ENCODE measurements at regions of chr11 and their contacts with region 1.

Region 1: DNA sequence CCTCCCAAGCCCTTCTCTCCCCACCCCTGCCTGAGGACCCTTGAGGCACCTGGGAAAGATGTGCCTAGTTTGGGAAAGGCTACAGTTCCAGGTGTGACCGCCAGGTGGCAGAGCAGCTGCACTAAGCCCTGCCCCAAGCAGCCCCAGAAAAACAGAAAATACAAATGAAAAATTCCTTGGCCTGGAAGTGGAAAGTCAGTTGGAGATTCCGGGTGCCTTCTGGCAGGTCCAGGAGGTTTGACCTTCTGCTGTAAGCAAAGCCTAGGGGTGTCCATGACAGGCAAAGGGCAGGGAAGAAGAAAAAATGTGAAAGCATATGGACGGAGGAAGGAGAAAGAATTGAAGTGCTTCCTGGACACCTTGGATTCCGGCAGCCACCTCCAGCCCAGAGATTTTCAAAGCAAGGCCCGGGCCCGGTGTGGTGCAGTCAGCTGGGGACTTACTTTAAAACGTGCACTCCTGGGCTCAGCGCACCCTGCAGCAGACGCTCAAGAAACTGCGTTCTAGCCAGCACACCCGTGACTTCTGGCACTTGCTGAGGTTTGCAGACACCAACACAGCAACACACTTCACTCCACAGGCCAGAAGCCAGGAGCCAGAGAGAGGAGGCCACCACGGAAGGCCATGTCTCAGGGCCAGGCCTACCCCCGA is 37.3 kb upstream of the SLC22A12 start:
- DNase-seq: peak; percentile 78
- ATAC-seq: peak; percentile 75

Region 2: DNA sequence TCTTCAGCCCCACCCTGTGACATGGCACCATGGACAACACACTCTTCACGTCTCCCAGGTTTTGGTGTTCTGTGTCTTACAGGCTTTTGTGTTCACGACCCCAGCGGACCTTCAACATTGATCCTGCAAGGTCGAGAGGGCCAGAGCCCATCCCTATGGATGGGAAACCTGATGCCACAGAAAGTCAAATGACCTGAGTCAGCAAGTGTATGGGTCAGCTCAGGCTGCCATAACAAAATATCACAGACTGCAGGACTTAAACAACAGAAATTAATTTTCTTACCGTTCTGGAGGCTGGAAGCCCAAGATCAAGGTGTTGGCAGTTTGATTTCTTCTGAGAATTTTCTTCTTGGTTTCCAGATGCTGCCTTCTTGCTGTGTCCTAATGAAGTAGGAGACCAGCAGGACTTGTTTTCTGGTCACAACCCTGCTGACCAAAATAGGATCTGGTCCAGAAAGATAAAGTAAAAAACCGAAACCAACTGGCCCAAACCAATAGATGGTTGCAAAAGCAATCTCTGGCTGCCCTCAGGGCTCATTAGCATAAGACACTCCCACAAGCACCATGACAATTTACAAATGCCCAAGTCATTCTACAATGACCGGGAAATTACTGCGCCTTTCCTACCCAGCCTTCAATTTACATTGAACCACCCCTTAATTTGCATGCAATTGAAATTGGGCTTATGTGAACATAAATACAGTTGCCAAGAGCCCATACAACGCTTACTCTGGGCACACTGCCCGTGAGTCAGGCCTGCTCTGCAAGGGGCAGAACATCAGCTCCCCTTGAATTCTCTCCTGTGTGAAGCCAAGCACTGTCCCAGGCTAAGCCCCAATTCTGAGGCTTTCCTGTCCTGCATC is 80.9 kb before region 1 on chr11:
- intact Hi-C with region 1: no loop called
- DNase-seq: no peak
- ATAC-seq: no peak

Region 3: DNA sequence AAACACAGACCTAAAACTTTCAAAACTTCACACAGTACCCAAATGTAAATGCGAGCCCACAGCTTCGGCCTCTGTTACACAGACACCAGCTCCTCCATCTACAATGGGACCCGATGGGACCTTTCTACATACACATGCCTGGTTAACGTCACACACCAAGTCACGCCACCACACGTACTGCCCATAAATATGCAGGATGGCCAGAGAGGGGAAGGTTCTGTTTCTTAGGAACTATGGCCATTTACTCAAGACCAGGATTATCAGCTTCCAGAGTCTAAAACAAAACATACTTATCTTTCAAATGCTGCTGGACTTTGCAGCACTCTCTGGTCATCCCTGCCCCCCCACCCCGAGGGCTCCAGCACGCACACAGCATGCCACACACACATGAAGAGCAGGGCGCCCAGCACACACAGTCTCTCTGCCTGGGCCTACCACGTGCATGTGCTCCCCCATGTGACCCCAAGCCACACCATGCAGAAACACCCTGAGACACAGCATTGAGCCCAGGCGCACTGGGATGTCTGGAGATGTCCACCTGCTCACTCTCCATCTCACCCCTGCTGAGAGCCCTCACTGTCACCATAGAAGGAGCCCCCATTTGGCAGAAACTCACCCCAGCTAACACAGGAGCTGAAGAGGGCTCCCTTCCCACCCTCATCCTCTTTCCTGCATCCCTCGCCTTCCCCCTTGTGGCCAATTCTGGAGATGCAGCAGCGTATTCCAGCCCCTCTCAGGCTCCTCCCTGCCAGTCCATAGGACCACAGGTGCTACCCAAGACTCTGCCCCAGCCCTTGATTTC is 99.1 kb after region 1 on chr11:
- intact Hi-C with region 1: loop called (anchors 5 kb)
- DNase-seq: peak; percentile 81
- ATAC-seq: peak; percentile 81